ENCODE measurements at regions of chr14 and their contacts with region 1.

Region 1: DNA sequence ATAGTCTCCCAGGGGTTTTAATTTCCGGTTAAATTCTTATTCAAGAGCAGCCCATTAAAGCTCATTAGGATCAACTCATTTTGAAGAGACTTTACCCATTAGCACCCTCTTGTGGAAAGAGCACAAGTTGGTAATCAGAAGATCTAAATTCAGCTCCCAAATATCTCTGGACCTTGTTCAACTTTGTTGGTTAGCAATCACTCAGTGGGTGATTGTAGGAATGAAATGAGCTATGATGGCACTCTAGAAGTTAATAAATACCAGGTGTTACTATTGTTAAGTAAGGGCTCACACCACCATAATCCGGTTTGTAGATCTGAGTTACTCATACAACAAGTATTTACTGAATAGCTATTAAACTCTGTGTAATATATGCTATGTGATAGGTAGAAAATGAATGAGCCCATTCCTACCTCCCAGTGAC is 42.9 kb downstream of the TRIP11 start:
- DNase-seq: peak in 3 of 14 experiments; percentile 63 to 68 (median 67)
- ATAC-seq: peak; percentile 61
- H3K4me3 ChIP-seq: no peak overlapping the region
- H3K4me3 Mint-ChIP-seq: no peak overlapping the region
- H3K27ac ChIP-seq: no peak overlapping the region
- H3K27ac Mint-ChIP-seq: peak overlapping the region; percentile 6
- H3K4me1 ChIP-seq: no peaks in the 10 kb centered on the region
- H3K4me1 Mint-ChIP-seq: peaks cover 33% of the 10 kb centered on the region
- H3K27me3 ChIP-seq: no peaks in the 10 kb centered on the region
- H3K27me3 Mint-ChIP-seq: no peaks in the 10 kb centered on the region
- CTCF ChIP-seq: peak; percentile 71

Region 2: DNA sequence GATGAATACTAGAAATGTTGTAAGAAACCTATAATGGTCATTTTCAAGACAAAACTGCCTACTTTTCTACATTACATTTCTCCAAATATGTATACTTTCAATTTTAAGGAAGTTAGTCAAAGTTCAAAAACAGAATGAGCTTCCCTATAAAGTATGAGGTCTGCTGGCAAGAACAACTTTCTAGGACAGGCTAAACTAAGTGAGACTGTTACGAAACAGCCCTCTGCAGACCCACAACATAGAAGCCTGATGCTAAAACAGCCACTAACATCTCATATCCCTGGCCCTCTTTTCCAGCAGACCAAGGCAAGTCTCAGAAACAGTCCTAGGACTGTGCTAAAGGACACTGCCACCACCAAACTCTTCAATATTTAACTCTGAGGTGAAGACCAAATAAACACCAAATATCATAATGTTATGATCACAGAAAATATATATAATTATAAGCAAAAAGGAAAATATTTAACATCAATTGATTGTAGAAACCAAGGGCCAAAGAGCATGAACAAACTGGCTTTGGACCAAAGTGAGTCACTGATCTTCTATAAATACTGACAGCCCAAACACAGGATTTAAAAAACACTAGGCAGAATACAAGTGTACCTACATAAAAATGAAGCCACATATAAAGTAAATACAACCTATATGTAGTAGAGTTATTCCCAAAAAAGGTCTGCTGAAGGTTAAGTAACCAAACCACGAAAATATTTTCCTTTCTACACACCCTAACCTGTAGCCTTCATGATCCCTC is 514.5 kb before region 1 on chr14:
- CTCF ChIA-PET with region 1: no interaction called
- POLR2A ChIA-PET with region 1: no interaction called
- intact Hi-C with region 1: loop called (anchors 10 kb)
- DNase-seq: no peak
- ATAC-seq: no peak
- H3K4me3 ChIP-seq: no peak overlapping the region
- H3K4me3 Mint-ChIP-seq: no peak overlapping the region
- H3K27ac ChIP-seq: no peak overlapping the region
- H3K27ac Mint-ChIP-seq: peak overlapping the region; percentile 69
- H3K4me1 ChIP-seq: peaks cover 6% of the 10 kb centered on the region
- H3K4me1 Mint-ChIP-seq: peaks cover 84% of the 10 kb centered on the region
- H3K27me3 ChIP-seq: no peaks in the 10 kb centered on the region
- H3K27me3 Mint-ChIP-seq: no peaks in the 10 kb centered on the region
- CTCF ChIP-seq: no peak

Region 3: DNA sequence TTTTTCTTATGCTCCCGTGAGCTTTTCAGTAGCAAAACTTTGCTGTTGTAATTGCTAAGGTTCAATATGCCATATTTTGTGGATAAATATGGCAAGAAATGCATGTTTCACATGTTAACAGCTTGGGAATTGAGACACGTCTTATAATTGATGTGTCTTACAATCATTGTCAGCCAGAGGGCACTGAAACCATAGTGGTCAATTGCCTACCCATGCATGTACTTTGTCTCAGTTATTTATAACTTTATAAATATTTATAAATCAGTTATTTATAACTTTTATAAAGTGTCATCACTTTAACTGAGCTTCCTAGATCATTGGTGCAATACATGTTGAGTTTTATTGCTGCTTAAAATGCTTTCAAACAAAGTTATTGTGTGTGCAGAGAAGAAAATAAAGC is 347.0 kb before region 1 on chr14:
- CTCF ChIA-PET with region 1: interaction called, 5 read pairs
- POLR2A ChIA-PET with region 1: no interaction called
- intact Hi-C with region 1: loop called in 1 of 2 experiments (anchors 5 kb)
- DNase-seq: peak in 5 of 14 experiments; percentile 11 to 54 (median 49)
- ATAC-seq: peak; percentile 76
- H3K4me3 ChIP-seq: no peak overlapping the region
- H3K4me3 Mint-ChIP-seq: no peak overlapping the region
- H3K27ac ChIP-seq: no peak overlapping the region
- H3K27ac Mint-ChIP-seq: no peak overlapping the region
- H3K4me1 ChIP-seq: no peaks in the 10 kb centered on the region
- H3K4me1 Mint-ChIP-seq: no peaks in the 10 kb centered on the region
- H3K27me3 ChIP-seq: no peaks in the 10 kb centered on the region
- H3K27me3 Mint-ChIP-seq: no peaks in the 10 kb centered on the region
- CTCF ChIP-seq: peak; percentile 79

Region 4: DNA sequence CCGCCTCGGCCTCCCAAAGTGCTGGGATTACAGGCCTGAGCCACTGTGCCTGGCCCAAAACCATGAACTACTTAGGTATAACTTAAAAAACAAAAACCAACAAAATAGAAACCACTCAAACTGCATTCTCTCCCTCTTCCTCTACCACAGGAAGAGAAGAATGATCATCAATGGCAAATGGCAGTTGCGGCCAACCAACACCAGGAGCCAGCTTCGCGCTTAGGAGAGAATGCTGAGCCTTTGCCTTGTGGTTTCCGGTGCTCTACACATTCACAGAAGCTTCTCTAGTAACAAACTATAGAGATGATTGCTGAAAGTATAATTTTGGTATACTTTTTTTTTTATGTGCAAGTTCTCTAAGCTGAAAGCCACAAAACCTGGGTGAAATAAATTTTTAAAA is 282.2 kb before region 1 on chr14:
- CTCF ChIA-PET with region 1: no interaction called
- POLR2A ChIA-PET with region 1: no interaction called
- intact Hi-C with region 1: loop called in 1 of 2 experiments (anchors 2 kb)
- DNase-seq: peak in 9 of 14 experiments; percentile 16 to 63 (median 41)
- ATAC-seq: peak; percentile 96
- H3K4me3 ChIP-seq: no peak overlapping the region
- H3K4me3 Mint-ChIP-seq: peak overlapping the region; percentile 9
- H3K27ac ChIP-seq: no peak overlapping the region
- H3K27ac Mint-ChIP-seq: peak overlapping the region; percentile 67
- H3K4me1 ChIP-seq: no peaks in the 10 kb centered on the region
- H3K4me1 Mint-ChIP-seq: peaks cover 11% of the 10 kb centered on the region
- H3K27me3 ChIP-seq: no peaks in the 10 kb centered on the region
- H3K27me3 Mint-ChIP-seq: no peaks in the 10 kb centered on the region
- CTCF ChIP-seq: peak; percentile 43

Region 5: DNA sequence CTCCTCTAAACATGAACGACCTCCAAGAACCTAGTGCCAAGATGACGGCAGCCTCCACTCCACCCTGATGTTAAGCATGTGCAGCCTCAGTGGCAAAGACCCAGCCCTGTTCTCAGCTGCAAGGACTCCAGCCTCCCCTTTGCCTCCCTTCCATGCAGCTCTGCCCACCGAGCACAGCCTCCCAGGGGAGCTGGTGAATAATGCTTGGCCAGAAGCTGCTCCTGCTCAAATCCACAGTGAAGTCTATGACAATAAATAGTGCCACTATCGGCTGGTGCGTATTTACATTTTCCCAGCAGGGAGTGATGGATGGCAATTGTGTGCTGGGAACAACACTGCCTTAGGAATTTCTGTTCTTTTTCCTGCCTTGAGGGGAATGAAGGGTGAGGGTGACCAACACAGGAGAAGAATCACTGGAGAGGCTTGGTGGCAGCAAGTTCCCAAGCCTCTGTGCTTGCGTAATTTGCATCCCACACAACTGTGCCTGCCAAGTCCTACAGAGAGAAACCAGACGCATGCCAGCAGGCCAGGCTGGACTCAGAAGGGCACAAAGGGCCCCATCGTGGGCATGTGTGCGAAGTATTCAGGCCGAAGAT is 99.8 kb before region 1 on chr14:
- CTCF ChIA-PET with region 1: no interaction called
- POLR2A ChIA-PET with region 1: no interaction called
- intact Hi-C with region 1: no loop called
- DNase-seq: no peak
- ATAC-seq: no peak
- H3K4me3 ChIP-seq: no peak overlapping the region
- H3K4me3 Mint-ChIP-seq: no peak overlapping the region
- H3K27ac ChIP-seq: no peak overlapping the region
- H3K27ac Mint-ChIP-seq: no peak overlapping the region
- H3K4me1 ChIP-seq: peaks cover 23% of the 10 kb centered on the region
- H3K4me1 Mint-ChIP-seq: peaks cover 30% of the 10 kb centered on the region
- H3K27me3 ChIP-seq: no peaks in the 10 kb centered on the region
- H3K27me3 Mint-ChIP-seq: no peaks in the 10 kb centered on the region
- CTCF ChIP-seq: no peak

Region 6: DNA sequence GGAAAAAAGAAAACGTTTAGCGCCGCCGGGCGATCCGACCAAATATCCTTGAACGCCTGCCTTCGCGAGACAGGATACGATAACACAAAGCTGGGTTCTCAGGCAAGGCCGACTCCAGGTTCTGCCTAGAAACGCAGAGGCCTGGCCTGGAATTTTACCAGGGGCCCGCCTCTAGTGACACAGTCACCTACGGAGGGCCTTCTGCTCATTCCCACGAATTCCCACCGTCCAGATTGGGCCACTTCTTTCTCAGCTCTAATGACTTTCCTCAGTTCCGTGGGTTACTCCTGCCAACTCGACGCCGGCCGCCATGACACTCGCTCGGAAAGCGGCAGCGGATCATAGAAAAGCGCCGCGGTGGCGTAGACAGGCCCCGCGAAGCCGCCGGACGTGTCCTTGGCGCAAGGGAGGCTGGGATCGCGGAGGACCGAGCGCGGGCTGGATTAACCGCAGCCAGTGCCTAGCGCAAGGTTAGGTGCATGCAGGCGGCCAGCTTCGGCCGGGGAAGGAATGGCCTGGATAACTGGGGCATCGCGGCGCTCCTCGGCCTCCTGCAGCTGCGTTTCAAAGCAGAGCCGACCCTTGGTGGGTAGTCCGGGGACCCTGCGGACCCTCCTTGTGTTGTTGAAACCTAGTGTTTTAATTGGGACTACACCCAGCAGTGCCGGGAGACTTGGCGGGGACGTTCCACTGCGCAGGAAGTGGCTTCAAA is 42.9 kb after region 1 on chr14 and contains the start of gene TRIP11:
- CTCF ChIA-PET with region 1: interaction called, 4 read pairs
- POLR2A ChIA-PET with region 1: interaction called, 10 read pairs
- intact Hi-C with region 1: no loop called
- DNase-seq: peak; percentile 88 to 97 (median 94)
- ATAC-seq: peak; percentile 86
- H3K4me3 ChIP-seq: peak within 1 kb of the TSS; percentile 72
- H3K4me3 Mint-ChIP-seq: peak within 1 kb of the TSS; percentile 99
- H3K27ac ChIP-seq: peak within 1 kb of the TSS; percentile 90 to 92
- H3K27ac Mint-ChIP-seq: no peak within 1 kb of the TSS
- H3K4me1 ChIP-seq: peaks cover 38% of the 10 kb centered on the region
- H3K4me1 Mint-ChIP-seq: peaks cover 53% of the 10 kb centered on the region
- H3K27me3 ChIP-seq: no peaks in the 10 kb centered on the region
- H3K27me3 Mint-ChIP-seq: no peaks in the 10 kb centered on the region
- CTCF ChIP-seq: no peak
- total RNA-seq, gene TRIP11: 30.0 to 31.2 TPM